ENCODE measurements at regions of chr5 and their contacts with region 1.

Region 1: DNA sequence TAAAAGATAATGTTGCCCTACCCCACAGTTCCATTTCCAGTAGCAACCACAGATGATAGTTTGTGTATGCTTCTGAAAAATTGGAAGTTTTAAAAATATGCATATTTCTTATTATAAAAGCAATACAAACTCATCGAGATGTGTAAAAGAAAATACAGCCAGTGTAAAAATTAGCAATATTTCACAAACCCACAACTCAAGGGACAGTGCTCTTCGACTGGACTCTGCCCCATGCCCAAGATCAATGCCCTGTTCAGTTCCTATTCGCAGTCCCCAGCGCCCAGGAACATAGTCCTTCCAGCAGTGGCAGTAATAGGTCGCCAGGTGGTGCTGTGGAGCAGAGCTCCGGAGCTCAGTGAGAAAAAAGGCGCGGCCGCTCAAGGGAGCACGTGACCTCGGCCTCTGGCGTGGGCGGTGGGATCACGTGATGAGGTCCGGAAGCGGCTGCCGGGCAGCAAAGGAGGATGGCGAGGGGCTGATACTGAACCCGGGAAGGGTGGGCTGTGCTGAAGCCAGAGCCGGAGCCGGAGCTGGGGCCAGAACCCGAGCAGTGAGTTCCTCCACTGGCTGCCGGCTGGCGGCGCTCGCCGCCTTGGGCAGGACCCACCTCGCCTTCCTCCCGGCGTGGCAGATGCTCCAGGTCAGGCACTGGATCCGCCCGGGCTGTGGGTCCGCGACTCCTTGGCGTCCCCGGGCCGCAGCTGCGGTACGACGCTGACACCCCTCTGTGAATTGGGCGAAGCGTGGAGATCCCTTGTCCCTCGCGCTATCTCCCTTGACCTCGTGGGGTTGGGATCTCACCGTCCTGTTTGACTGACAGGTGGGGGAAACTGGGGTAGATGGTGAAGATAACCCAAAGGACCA is at the start of gene SLC36A1:
- DNase-seq: peak; percentile 71 to 89
- H3K4me3 ChIP-seq: peak within 1 kb of the TSS; percentile 70
- H3K27ac ChIP-seq: no peak within 1 kb of the TSS
- H3K4me1 ChIP-seq: peaks cover 7% of the 10 kb centered on the region
- H3K27me3 ChIP-seq: no peaks in the 10 kb centered on the region
- CTCF ChIP-seq: peak; percentile 93
- total RNA-seq, gene SLC36A1: 7.4 and 11.0 TPM in 2 replicates

Region 2: DNA sequence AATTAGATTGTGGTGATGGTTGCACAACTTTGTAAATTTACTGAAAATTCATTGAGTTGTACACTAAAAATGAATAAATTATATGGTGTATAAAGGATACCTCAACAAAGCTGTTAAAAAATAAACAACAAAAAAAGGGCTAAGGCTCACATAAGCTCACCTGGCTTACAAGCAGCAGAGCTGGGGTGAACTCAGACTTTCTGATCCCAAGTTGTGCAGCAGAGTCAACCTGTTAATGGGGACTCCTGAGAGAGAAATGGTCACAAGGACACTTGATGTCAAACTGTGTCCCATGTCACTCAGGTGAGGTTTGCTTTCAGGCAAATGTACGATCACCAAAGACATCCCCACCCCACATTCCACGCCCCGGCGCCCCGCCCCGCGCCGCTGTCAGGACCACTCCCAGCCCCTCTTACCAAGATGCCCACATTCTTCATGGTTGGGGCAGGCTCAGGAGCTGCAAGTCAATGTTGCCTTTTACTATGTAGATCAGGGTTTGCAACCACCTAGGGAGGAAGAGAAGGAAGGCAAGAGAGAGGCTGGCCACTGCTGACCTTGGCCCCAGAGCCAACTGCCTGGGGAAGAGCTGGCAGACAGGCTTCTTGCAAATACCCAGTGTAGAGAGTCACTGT is 22.4 kb before region 1 on chr5:
- CTCF ChIA-PET with region 1: interaction called, 10 read pairs
- POLR2A ChIA-PET with region 1: no interaction called
- intact Hi-C with region 1: no loop called
- DNase-seq: no peak
- H3K4me3 ChIP-seq: no peak overlapping the region
- H3K27ac ChIP-seq: no peak overlapping the region
- H3K4me1 ChIP-seq: no peaks in the 10 kb centered on the region
- H3K27me3 ChIP-seq: peaks cover 23% of the 10 kb centered on the region
- CTCF ChIP-seq: no peak

Region 3: DNA sequence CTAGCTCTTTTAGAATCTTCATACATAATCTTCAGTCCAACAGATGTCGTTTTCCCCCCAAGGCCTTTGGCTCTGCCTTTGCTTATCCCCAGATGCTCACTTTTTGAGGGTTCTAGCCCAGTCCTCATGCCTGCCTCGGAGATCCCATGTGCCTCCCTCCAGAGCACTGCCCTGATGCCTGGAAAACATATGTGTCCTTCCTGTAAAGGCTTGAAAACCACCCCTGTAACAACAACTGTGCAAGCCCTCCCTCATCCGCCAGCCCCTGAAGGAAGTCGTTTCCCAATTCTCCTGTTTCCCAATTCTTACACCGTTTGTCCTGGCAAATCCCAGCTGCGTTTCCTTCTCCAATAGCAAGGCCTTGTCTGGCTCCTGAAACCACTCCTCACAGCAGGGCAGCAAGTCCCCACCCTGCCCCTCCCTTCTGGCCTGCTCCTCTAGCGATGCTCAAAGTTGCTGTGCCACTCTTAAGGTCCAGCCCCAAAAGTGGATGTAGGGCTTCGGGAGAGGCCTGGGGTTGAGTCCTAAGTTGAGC is 52.2 kb after region 1 on chr5:
- CTCF ChIA-PET with region 1: no interaction called
- POLR2A ChIA-PET with region 1: no interaction called
- intact Hi-C with region 1: loop called (anchors 1 kb)
- DNase-seq: no peak
- H3K4me3 ChIP-seq: no peak overlapping the region
- H3K27ac ChIP-seq: no peak overlapping the region
- H3K4me1 ChIP-seq: no peaks in the 10 kb centered on the region
- H3K27me3 ChIP-seq: no peaks in the 10 kb centered on the region
- CTCF ChIP-seq: no peak

Region 4: GRCh38 chr5:151523335-151523734 is 75.9 kb after region 1 on chr5:
- CTCF ChIA-PET with region 1: interaction called, 8 read pairs
- POLR2A ChIA-PET with region 1: no interaction called
- intact Hi-C with region 1: loop called (anchors 1 kb)
- DNase-seq: peak in 1 of 2 experiments; percentile 41
- H3K4me3 ChIP-seq: no peak overlapping the region
- H3K27ac ChIP-seq: no peak overlapping the region
- H3K4me1 ChIP-seq: peaks cover 5% of the 10 kb centered on the region; the same call in 1 of the 2 replicates
- H3K27me3 ChIP-seq: no peaks in the 10 kb centered on the region
- CTCF ChIP-seq: peak; percentile 76